Ovary (tissue), 10 donors: ENCODE measurements at regions of chr6 and their contacts with region 1.

Region 1: DNA sequence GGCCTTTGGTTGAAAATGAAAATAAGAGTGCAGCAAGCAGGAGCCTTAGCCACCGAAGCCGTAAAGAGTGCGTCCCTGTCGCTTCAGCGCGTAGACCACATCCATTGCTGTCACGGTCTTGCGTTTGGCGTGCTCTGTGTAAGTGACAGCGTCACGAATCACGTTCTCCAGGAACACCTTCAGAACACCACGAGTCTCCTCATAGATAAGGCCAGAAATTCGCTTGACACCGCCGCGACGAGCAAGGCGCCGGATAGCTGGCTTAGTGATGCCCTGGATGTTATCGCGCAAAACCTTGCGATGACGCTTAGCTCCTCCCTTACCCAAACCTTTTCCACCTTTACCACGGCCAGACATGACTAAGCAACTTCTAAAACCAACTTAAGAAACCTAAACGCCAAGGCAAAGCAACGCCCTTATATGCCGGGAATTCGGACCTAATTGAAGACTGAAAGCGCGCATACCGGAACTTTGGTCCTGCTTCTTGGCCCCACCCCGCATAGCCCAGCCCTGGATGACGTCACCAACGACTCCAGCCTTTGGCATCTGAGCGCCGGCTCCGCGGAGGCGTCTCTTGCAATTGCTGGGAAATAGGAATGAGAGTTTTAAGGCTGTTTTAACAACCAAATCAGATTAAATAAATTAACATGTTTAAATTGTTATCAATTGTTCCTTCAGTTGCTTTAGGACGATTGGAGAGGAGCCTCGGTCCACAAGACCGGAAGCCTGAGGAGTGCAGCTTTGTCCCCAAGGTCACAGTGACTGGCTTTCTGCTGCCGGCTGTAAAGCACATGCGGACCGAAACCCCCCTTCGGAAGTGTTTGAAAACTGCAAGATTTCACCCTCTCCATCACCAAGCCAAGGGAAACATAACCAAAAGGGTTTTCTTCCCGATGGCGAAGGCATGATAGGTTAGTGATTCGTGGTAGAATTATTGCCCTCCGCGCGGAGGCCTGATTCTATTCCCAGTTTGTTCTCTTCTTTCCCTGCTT is 79.6 kb upstream of the BTN3A2 start:
- DNase-seq: peak; percentile 94 to 98 (median 97)
- H3K4me3 ChIP-seq: peak overlapping the region; percentile 62
- H3K27ac ChIP-seq: peak overlapping the region; percentile 55 to 89
- H3K4me1 ChIP-seq: peaks cover 6% of the 10 kb centered on the region
- H3K27me3 ChIP-seq: no peaks in the 10 kb centered on the region
- CTCF ChIP-seq: peak in 1 of 3 donors; percentile 10
- EP300 ChIP-seq: peak; percentile 93
- POLR2A ChIP-seq: peak; percentile 88

Region 2: DNA sequence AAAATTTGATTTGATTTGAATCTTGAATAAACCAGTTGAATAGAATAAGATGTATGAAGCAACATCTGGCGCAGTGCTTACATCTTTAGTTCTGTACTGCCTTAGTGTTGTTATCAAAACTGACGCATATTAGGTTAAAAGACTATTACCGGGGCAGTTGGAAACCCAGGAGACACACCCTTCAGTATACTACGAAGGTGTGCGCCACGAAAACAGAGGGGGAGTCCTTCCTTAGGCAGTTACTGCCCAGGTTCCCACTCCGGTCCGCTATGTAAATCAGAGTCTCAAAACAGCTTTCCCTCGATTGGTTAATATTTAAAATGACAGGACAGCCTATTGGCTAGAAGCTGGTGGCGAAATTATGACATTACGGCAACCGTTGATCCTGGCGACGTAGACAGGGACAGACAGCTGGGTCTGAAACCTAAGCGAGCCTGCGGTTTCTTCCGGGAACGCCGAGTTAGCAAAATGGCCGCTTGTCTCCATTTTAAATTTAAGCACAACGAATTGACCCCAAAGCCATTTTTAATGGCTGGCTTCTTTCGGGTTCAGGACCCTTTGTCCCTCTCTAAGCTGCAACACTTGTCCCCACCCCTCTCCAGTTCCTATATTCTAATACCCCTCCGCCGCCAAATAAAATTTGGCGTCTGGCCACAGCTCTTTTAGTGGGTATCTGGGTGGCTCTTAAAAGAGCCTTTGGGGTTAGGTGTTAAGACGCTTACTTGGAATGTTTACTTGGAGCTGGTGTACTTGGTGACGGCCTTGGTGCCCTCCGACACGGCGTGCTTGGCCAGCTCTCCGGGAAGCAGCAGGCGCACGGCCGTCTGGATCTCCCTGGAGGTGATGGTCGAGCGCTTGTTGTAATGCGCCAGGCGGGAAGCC is 162.4 kb before region 1 on chr6:
- intact Hi-C with region 1: loop called in 1 of 4 experiments (anchors 10 kb)
- DNase-seq: peak; percentile 83 to 92 (median 90)
- H3K4me3 ChIP-seq: peak overlapping the region; percentile 90
- H3K27ac ChIP-seq: peak overlapping the region; percentile 0 to 93
- H3K4me1 ChIP-seq: peaks cover 3% of the 10 kb centered on the region
- H3K27me3 ChIP-seq: no peaks in the 10 kb centered on the region
- CTCF ChIP-seq: peak in 2 of 3 donors; percentile 5 to 15
- EP300 ChIP-seq: peak; percentile 90
- POLR2A ChIP-seq: peak; percentile 66

Region 3: GRCh38 chr6:27761391-27761790 is 1476.0 kb after region 1 on chr6:
- intact Hi-C with region 1: no loop called
- DNase-seq: no peak
- H3K4me3 ChIP-seq: no peak overlapping the region
- H3K27ac ChIP-seq: no peak overlapping the region
- H3K4me1 ChIP-seq: peaks cover 3% of the 10 kb centered on the region
- H3K27me3 ChIP-seq: no peaks in the 10 kb centered on the region
- CTCF ChIP-seq: no peak
- EP300 ChIP-seq: no peak
- POLR2A ChIP-seq: no peak